WTC11 (cell line): ENCODE measurements at regions of chr15 and their contacts with region 1.

Region 1: DNA sequence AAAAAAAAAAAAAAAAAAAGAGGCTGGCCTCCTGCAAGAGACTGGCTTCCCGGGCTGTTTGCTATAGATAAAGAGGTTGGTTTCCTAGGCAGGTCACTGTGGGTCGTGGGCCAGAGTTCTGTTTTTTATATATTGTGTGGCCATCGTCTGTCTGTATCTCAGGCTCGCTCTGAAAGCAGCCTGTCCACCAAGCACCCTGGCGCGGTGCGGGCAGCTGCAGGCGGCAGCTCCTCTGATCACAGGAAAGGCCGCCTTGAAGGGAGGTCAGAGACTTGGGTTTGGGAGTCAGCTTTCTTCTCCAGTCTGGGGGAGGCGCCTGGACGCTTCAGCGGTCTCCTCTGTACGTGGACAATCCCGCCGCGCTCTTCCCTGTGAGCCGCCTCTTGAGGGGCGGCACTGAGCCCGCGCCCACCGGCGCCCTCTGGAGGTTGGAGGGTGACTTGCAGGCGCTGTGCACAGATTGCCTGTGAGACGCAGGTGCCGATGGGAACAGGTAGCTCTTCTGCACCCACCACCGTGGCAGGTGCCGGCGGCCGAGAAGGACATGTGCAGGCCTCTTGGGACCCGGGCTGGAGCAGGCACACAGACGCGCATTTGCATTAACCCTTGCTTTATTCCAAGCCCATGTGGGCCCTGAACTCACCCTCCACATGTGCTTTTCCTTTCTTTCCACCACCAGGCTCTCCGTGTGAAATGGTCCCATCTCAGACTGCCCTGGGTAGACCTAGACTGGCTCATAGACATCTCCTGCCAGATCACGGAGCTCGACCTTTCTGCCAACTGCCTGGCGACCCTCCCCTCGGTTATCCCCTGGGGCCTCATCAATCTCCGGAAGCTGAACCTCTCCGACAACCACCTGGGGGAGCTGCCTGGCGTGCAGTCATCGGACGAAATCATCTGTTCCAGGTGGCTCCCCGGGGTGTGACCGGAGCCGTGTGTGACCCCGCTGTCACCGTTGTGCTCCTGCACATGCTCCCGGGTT is 89.3 kb downstream of the LRRK1 start:
- DNase-seq: peak; percentile 95
- ATAC-seq: peak; percentile 86
- H3K4me3 Mint-ChIP-seq: peak overlapping the region; percentile 80
- H3K27ac Mint-ChIP-seq: no peak overlapping the region
- H3K4me1 Mint-ChIP-seq: peaks cover 35% of the 10 kb centered on the region
- H3K27me3 Mint-ChIP-seq: peaks cover 17% of the 10 kb centered on the region
- CTCF ChIP-seq: peak; percentile 98

Region 2: GRCh38 chr15:100854821-100855220 is 153.6 kb before region 1 on chr15:
- CTCF ChIA-PET with region 1: no interaction called
- POLR2A ChIA-PET with region 1: no interaction called
- DNase-seq: no peak
- ATAC-seq: no peak
- H3K4me3 Mint-ChIP-seq: no peak overlapping the region
- H3K27ac Mint-ChIP-seq: no peak overlapping the region
- H3K4me1 Mint-ChIP-seq: no peaks in the 10 kb centered on the region
- H3K27me3 Mint-ChIP-seq: peaks cover 9% of the 10 kb centered on the region
- CTCF ChIP-seq: no peak

Region 3: DNA sequence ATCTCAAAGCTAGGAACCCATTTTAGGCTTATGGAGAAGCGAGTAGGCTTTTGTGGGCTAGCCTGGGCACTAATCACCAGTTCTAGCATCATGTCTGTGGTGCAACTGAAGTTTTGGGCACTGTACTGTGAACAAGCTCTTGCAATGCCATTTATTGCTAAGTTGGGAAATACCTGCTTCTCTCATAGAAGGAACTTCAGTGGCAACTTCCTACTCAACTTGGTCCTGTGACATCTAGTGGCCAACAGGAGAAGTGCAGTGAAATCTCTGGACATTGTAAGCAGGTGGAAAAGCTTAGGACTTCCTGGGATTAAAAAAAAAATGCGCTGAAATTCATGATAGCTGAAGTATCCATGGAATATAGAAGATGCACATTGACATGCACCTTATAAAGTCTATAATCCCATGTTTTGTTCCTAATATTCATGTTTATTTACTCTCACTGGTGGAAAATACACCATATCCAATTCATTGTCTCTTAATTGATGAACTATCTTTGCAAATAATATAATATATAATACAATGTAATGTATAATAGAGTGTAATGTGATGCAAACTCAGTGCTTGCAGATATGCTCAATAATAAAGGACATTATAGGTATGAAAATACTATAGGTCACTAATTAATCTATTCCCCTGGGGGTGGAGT is 135.3 kb before region 1 on chr15:
- CTCF ChIA-PET with region 1: interaction called, 45 read pairs
- POLR2A ChIA-PET with region 1: no interaction called
- DNase-seq: peak; percentile 71
- ATAC-seq: peak; percentile 47
- H3K4me3 Mint-ChIP-seq: no peak overlapping the region
- H3K27ac Mint-ChIP-seq: no peak overlapping the region
- H3K4me1 Mint-ChIP-seq: peaks cover 17% of the 10 kb centered on the region
- H3K27me3 Mint-ChIP-seq: peaks cover 38% of the 10 kb centered on the region
- CTCF ChIP-seq: peak; percentile 83

Region 4: GRCh38 chr15:100902436-100903167 is 105.8 kb before region 1 on chr15:
- CTCF ChIA-PET with region 1: interaction called, 21 read pairs
- POLR2A ChIA-PET with region 1: no interaction called
- DNase-seq: no peak
- ATAC-seq: no peak
- H3K4me3 Mint-ChIP-seq: no peak overlapping the region
- H3K27ac Mint-ChIP-seq: peak overlapping the region; percentile 45
- H3K4me1 Mint-ChIP-seq: peaks cover 7% of the 10 kb centered on the region; the same call in 1 of the 2 replicates
- H3K27me3 Mint-ChIP-seq: no peaks in the 10 kb centered on the region
- CTCF ChIP-seq: no peak

Region 5: DNA sequence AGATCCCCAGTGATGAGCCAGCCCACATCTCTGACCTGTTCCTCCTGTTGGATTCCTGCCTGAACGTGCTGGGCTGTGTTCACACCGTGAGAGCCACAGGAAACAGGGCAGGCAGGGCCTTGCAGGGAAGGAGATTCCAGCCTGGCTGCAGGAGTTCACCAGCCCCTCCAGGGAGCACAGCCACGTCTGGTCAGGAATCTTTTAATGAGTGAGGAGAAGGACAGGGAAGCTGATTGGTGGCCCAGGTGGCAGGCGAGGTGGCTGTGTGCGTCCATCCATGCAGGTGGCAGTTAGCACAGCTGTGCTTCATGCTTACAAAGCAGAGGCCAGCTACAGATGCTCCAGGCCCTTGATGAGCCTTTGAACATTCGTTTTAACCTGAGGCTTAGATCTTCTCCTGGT is 78.8 kb before region 1 on chr15:
- CTCF ChIA-PET with region 1: interaction called, 43 read pairs
- POLR2A ChIA-PET with region 1: interaction called, 3 read pairs
- DNase-seq: no peak
- ATAC-seq: peak; percentile 17
- H3K4me3 Mint-ChIP-seq: no peak overlapping the region
- H3K27ac Mint-ChIP-seq: no peak overlapping the region; the same call in 1 of the 2 replicates
- H3K4me1 Mint-ChIP-seq: peaks cover 26% of the 10 kb centered on the region
- H3K27me3 Mint-ChIP-seq: no peaks in the 10 kb centered on the region
- CTCF ChIP-seq: no peak

Region 6: DNA sequence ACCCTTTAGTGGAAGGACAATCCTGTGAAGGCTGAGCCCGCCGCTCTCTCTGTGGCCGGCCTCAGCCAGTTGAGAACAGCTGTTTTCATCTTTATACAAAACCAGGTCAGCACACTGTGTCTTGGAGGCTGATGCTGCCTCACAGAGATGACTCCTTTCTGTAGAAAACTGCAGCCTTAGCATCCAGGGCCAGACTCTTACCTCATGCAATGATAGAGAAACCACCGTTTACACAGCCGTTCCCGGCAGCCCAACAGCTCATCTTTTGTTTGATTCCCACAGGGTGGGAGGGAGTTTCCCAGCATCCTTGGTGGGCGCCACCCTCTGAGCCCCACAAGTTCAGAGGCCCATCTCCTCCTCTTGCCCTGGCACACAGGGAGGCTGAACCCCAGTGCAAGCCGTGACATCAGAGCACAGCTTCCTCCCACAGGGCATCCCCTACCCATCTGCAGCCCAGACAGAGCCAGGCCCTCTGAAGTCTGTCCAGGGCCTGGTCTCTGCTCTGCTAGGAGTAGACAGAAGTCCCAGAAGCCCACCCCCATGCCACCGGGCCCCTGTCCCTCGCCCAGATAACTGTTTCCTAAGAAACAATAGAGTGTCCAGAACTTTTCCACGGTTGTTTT is 15.7 kb after region 1 on chr15:
- CTCF ChIA-PET with region 1: interaction called, 76 read pairs
- POLR2A ChIA-PET with region 1: no interaction called
- DNase-seq: no peak
- ATAC-seq: no peak
- H3K4me3 Mint-ChIP-seq: no peak overlapping the region
- H3K27ac Mint-ChIP-seq: no peak overlapping the region
- H3K4me1 Mint-ChIP-seq: peaks cover 21% of the 10 kb centered on the region
- H3K27me3 Mint-ChIP-seq: no peaks in the 10 kb centered on the region; the same call in 1 of the 2 replicates
- CTCF ChIP-seq: no peak

Region 7: DNA sequence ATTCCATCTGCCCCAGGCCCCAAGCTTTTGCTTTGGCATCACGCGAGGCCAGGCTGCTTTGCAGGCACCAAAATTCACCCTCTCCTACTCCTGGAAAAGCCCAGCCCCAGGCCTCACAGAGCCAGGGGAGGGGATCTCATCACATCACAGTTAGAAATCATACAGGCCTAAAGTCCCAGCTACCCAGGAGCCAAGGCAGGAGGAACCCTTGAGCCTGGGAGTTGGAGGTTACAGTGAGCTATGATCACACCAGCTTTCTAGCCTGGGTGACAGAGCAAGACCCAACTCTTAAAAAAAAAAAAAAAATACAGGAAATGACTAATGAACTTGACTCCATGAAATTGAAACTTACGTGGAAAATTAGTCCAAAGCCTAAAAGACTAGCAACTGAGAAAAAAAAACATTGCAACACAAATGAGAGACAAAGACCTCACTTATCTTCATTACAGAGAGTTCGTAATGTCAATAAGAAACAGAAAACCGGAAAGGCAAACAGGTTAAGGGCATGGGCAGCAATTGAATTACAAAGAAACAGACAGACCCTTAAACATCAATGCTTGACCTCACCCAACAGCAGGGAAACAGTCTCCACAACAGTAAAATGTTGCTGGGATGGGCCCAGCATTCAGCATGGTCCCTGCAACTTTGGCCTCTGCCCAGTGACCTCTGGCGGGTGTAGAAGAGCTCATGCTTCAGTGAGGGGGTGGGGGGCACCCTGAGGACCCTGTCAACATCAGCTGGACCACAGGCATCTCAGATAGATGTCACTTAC is 62.2 kb after region 1 on chr15:
- CTCF ChIA-PET with region 1: interaction called, 53 read pairs
- POLR2A ChIA-PET with region 1: interaction called, 3 read pairs
- DNase-seq: no peak
- ATAC-seq: peak; percentile 6; the same call in 1 of the 2 replicates
- H3K4me3 Mint-ChIP-seq: peak overlapping the region; percentile 14; the same call in 1 of the 2 replicates
- H3K27ac Mint-ChIP-seq: peak overlapping the region; percentile 98
- H3K4me1 Mint-ChIP-seq: peaks cover 62% of the 10 kb centered on the region
- H3K27me3 Mint-ChIP-seq: peaks cover 17% of the 10 kb centered on the region
- CTCF ChIP-seq: no peak

Region 8: DNA sequence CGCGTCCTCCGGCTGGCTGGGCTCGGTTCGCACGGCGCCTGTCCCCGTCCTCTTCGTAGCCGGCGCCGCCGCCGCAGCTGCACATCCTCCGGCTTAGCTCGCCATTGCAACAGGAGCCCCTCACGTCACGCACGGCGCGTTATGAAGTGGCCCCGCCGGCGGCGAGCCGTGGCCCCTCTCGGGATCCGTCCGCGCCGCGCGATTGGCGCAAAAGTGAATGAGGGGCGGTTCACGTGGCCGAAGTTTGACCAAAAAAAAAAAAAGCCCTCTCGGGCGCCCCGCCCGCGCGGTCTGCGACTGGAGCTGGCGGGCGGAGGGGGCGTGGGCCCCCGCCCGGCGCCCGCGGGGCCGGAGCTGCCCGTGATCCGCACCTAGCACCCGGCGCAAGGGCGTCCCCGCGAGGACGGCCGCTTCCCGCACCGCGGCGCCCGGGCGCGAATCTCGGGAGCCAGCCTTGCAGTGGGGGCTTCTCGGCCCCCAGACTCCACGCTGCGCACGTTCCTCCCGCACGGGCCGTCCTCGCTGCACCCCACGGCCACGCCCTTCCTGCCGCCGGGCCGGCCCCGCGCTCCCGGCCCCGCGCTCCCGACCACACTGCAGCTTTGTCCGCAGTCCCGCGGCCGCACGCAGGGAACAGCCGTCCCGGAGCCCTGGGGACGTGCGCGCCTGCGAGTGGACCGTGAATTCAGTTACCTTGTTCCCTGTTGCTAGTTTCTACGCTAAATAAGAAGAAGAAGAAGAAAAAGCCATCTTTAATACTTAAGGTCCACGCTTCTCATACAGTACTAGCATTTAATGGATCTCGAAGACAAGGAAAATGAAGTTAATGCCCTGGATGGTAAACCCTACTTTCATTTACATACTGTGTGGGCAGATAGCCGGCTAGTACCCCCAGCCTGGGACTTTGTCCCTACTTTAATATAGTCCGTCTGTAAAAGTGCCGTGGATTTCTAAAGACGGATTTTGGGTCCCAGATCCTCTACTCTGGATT is 243.7 kb after region 1 on chr15 and contains the start of gene CHSY1:
- CTCF ChIA-PET with region 1: interaction called, 128 read pairs
- POLR2A ChIA-PET with region 1: interaction called, 4 read pairs
- DNase-seq: peak; percentile 56
- ATAC-seq: peak; percentile 17
- H3K4me3 Mint-ChIP-seq: peak within 1 kb of the TSS; percentile 91
- H3K27ac Mint-ChIP-seq: peak within 1 kb of the TSS; percentile 63; the same call in 1 of the 2 replicates
- H3K4me1 Mint-ChIP-seq: peaks cover 67% of the 10 kb centered on the region
- H3K27me3 Mint-ChIP-seq: no peaks in the 10 kb centered on the region
- CTCF ChIP-seq: no peak
- total RNA-seq, gene CHSY1: 56.3 to 59.1 TPM (median 57.4 TPM) in 3 replicates

Region 9: GRCh38 chr15:101469520-101470288 is 461.3 kb after region 1 on chr15:
- CTCF ChIA-PET with region 1: no interaction called
- POLR2A ChIA-PET with region 1: no interaction called
- DNase-seq: no peak
- ATAC-seq: no peak
- H3K4me3 Mint-ChIP-seq: no peak overlapping the region
- H3K27ac Mint-ChIP-seq: no peak overlapping the region
- H3K4me1 Mint-ChIP-seq: no peaks in the 10 kb centered on the region
- H3K27me3 Mint-ChIP-seq: no peaks in the 10 kb centered on the region
- CTCF ChIP-seq: no peak